Heart right ventricle (tissue), 16 donors: ENCODE measurements at regions of chr1 and their contacts with region 1.

Region 1: DNA sequence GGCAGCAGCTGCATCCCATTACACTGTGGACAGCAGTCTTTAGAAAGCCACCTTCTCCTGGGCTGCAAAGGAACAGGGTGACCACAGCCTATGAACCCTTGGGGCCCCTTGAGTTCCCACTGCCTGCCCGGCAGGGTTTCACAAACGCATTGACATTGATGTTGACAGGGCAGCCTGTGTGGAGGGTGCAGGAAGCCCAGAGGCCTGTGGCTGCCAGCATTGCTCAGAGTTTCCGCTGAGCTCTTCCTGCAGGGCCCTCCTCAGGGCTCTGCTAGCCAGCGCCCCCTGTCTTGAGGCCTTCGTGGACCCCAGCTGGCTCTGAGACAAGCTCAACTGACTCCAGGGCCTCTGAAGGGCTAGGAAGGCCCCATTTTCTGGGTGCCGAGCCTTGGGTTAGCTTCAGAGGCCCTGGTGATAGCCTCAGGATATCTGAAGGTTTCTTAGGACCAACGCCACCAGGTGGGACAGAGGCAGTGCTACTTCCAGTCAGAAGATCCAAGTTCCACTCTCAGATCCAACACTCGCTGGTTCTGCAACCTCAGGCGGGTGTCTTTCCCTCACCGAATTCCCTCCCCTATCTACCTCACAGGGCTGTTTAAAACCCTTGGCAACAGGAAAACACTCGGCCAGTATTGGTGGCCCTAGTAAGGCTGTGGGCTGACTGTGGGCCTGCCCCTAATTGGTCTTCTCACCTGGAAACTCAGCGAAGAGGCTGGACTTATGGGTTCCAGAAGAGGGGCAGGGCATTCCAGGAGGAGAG is 27.2 kb upstream of the EPS8L3 start:
- DNase-seq: peak; percentile 55 to 63
- ATAC-seq: peak; percentile 54 to 72 (median 66)
- H3K4me3 ChIP-seq: no peak overlapping the region
- H3K27ac ChIP-seq: peak overlapping the region in 9 of 10 donors; percentile 5 to 80 (median 47)
- H3K4me1 ChIP-seq: peaks cover 33 to 78% (median 62%) of the 10 kb centered on the region in 9 donors
- H3K27me3 ChIP-seq: no peaks in the 10 kb centered on the region
- CTCF ChIP-seq: peak in 8 of 9 donors; percentile 37 to 73 (median 60)

Region 2: GRCh38 chr1:109643385-109644230 is 147.3 kb before region 1 on chr1:
- intact Hi-C with region 1: no loop called
- DNase-seq: peak; percentile 81 to 90
- ATAC-seq: peak; percentile 71 to 94 (median 89)
- H3K4me3 ChIP-seq: peak overlapping the region in 1 of 10 donors; percentile 7
- H3K27ac ChIP-seq: no peak overlapping the region
- H3K4me1 ChIP-seq: peaks cover 0 to 12% (median 6%) of the 10 kb centered on the region in 9 donors
- H3K27me3 ChIP-seq: no peaks in the 10 kb centered on the region
- CTCF ChIP-seq: peak; percentile 75 to 93 (median 88)

Region 3: DNA sequence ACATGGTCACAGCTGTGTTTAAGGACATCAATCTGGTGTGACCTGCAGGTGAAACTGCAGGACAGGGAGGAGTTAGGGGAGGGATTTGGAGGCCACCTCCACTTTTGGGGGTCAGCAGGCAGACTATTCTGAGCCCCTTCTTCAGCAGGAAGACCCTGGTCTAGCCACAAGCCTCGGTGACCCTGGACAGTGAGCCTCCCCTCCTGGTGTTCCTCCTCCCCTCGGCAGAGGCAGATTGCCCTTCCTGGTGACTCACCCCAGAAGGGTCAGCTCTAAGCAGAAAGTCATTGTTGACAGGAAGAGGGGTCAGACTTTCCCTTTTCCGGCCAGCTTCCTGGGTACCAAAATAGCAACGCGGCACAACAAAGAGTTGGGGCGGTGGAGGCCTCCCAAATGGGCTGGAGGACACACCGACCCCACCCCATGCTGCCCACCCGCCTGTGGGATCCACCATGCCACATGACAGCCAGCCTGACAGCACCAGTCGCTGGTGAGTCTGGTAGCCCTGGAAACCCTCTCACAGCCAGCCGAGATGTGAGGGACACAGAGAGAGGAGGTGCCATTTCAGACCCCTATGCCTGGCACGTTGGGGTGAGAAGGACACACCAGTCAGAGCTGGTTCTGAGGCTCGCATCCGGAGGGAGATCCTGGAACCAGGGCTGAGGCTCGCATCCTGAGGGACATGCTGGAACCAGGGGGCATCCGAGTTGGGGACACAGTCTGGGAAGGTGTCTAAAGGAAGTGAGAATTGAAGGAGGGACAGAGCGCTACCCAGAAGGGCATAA is 105.0 kb after region 1 on chr1:
- intact Hi-C with region 1: loop called in 1 of 10 experiments (anchors 1 kb)
- DNase-seq: peak; percentile 63 to 82
- ATAC-seq: peak; percentile 70 to 88 (median 82)
- H3K4me3 ChIP-seq: peak overlapping the region in 1 of 10 donors; percentile 15
- H3K27ac ChIP-seq: peak overlapping the region in 9 of 10 donors; percentile 61 to 85 (median 72)
- H3K4me1 ChIP-seq: peaks cover 9 to 92% (median 64%) of the 10 kb centered on the region in 9 donors
- H3K27me3 ChIP-seq: no peaks in the 10 kb centered on the region
- CTCF ChIP-seq: no peak